ENCODE measurements at regions of chr15 and their contacts with region 1.

Region 1: GRCh38 chr15:81274931-81275707 is 48.8 kb downstream of the STARD5 start:
- DNase-seq: peak; percentile 89
- H3K4me3 Mint-ChIP-seq: no peak overlapping the region
- H3K27ac Mint-ChIP-seq: peak overlapping the region; percentile 13
- H3K4me1 Mint-ChIP-seq: peaks cover 26% of the 10 kb centered on the region
- H3K27me3 Mint-ChIP-seq: peaks cover 2% of the 10 kb centered on the region

Region 2: GRCh38 chr15:80953936-80954778 is 321.0 kb before region 1 on chr15:
- CTCF ChIA-PET with region 1: no interaction called
- DNase-seq: no peak
- H3K4me3 Mint-ChIP-seq: no peak overlapping the region
- H3K27ac Mint-ChIP-seq: peak overlapping the region; percentile 29
- H3K4me1 Mint-ChIP-seq: peaks cover 6% of the 10 kb centered on the region
- H3K27me3 Mint-ChIP-seq: no peaks in the 10 kb centered on the region

Region 3: DNA sequence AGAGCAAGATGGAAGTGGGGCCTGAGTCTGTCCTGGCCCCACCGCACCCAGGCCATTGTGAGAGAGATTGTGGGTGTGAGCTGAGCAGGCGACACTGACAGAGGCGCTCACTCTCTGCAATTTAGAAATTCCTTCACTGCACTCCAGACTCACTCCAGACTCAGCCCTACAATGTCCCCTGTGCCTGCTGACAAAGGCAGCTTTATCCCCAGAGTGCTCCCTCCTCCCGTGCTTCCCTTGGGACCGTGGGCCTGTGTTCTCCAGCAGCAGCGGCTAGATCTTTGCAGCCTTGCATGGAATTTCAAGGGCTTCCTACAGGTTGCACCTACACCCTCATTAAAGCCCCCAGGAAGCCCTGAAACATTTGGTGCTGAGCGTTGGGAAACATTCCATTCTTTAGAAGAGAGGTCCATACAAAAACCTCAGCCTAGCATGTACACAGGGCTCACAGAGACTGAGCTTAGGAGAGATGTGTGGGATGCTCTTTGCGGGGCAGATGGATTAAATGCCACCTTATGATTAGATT is 79.7 kb before region 1 on chr15:
- CTCF ChIA-PET with region 1: no interaction called
- DNase-seq: no peak
- H3K4me3 Mint-ChIP-seq: no peak overlapping the region
- H3K27ac Mint-ChIP-seq: no peak overlapping the region
- H3K4me1 Mint-ChIP-seq: peaks cover 4% of the 10 kb centered on the region
- H3K27me3 Mint-ChIP-seq: peaks cover 50% of the 10 kb centered on the region

Region 4: DNA sequence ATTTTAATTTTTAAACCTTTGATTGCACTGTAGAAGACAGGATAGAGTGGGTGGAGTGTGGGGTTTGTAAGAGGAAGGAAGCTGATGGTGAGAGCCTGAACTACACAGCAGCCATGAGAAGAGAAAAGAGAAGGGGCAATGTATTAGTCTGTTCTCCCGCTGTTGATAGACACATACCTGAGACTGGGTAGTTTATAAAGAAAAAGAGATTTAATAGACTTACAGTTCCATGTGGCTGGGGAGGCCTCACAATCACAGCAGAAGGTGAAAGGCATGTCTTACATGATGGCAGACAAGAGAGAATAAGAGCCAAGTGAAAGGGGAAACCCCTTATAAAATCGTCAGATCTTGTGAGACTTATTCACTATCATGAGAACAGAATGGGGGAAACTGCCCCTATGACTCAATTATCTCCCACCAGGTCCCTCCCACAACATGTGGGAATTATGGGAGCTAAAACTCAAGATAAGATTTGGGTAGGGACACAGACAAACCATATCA is 11.6 kb after region 1 on chr15:
- CTCF ChIA-PET with region 1: interaction called, 202 read pairs
- DNase-seq: no peak
- H3K4me3 Mint-ChIP-seq: peak overlapping the region; percentile 19
- H3K27ac Mint-ChIP-seq: peak overlapping the region; percentile 89
- H3K4me1 Mint-ChIP-seq: peaks cover 70% of the 10 kb centered on the region
- H3K27me3 Mint-ChIP-seq: no peaks in the 10 kb centered on the region

Region 5: DNA sequence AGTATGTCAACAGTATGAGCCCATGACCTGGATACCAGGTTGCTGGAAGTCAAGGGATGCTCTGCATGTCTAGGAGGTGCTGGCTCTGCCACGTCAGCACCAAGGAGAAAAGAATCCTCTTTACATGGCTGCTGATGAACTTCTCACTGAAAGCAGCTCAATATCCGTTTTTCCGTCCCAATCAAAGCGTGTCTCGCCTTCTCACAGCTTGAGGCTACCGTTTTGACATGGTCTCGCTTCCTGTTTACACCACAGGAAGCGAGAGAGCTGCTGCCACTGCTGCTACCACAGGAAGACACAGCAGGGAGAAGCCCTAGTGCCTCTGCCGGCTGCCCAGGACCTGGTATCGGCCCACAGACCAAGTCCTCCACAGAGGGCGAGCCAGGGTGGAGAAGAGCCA is 21.6 kb after region 1 on chr15:
- CTCF ChIA-PET with region 1: interaction called, 202 read pairs
- DNase-seq: peak; percentile 87
- H3K4me3 Mint-ChIP-seq: peak overlapping the region; percentile 100
- H3K27ac Mint-ChIP-seq: peak overlapping the region; percentile 99
- H3K4me1 Mint-ChIP-seq: peaks cover 61% of the 10 kb centered on the region
- H3K27me3 Mint-ChIP-seq: no peaks in the 10 kb centered on the region

Region 6: GRCh38 chr15:81308260-81308659 is 33.1 kb after region 1 on chr15:
- CTCF ChIA-PET with region 1: interaction called, 202 read pairs
- DNase-seq: no peak
- H3K4me3 Mint-ChIP-seq: no peak overlapping the region
- H3K27ac Mint-ChIP-seq: no peak overlapping the region
- H3K4me1 Mint-ChIP-seq: peaks cover 83% of the 10 kb centered on the region
- H3K27me3 Mint-ChIP-seq: no peaks in the 10 kb centered on the region

Region 7: GRCh38 chr15:81323944-81324881 is 49.1 kb after region 1 on chr15 and contains the start of gene STARD5:
- CTCF ChIA-PET with region 1: interaction called, 13 read pairs
- DNase-seq: peak; percentile 99
- H3K4me3 Mint-ChIP-seq: peak within 1 kb of the TSS; percentile 84
- H3K27ac Mint-ChIP-seq: peak within 1 kb of the TSS; percentile 66
- H3K4me1 Mint-ChIP-seq: peaks cover 26% of the 10 kb centered on the region
- H3K27me3 Mint-ChIP-seq: peaks cover 9% of the 10 kb centered on the region

Region 8: DNA sequence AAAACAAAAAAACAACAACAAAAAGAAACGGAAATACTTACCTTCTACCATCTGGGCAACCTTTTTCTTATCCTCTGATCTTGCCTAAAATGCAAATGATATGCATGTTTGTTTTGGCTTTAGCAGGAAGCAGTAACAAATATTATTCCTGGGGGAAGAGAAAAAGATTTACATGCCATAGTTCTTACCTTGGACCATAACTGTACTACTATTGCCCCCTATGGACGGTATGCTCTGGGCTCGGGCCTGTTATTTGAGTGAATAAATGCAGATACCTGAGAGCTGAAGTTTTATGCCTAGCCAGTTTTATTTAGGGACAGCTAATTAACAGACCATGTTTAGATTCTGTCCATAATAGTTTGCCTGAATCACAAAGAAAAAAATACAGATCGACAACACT is 61.4 kb after region 1 on chr15:
- CTCF ChIA-PET with region 1: interaction called, 102 read pairs
- DNase-seq: peak; percentile 48
- H3K4me3 Mint-ChIP-seq: no peak overlapping the region
- H3K27ac Mint-ChIP-seq: no peak overlapping the region
- H3K4me1 Mint-ChIP-seq: peaks cover 3% of the 10 kb centered on the region
- H3K27me3 Mint-ChIP-seq: peaks cover 4% of the 10 kb centered on the region

Region 9: GRCh38 chr15:81400640-81401236 is 125.6 kb after region 1 on chr15:
- CTCF ChIA-PET with region 1: interaction called, 85 read pairs
- DNase-seq: no peak
- H3K4me3 Mint-ChIP-seq: no peak overlapping the region
- H3K27ac Mint-ChIP-seq: no peak overlapping the region
- H3K4me1 Mint-ChIP-seq: no peaks in the 10 kb centered on the region
- H3K27me3 Mint-ChIP-seq: no peaks in the 10 kb centered on the region